PC-9 (cell line): ENCODE measurements at regions of chr16 and their contacts with region 1.

Region 1: GRCh38 chr16:30429678-30430427 is at the start of gene DCTPP1:
- DNase-seq: peak; percentile 98 to 99
- H3K4me3 ChIP-seq: peak within 1 kb of the TSS; percentile 67
- H3K27ac ChIP-seq: peak within 1 kb of the TSS; percentile 3; the same call in 1 of the 2 replicates
- H3K4me1 ChIP-seq: peaks cover 12% of the 10 kb centered on the region
- H3K27me3 ChIP-seq: no peaks in the 10 kb centered on the region
- CTCF ChIP-seq: peak; percentile 91
- total RNA-seq, gene DCTPP1: 80.4 and 109 TPM in 2 replicates

Region 2: GRCh38 chr16:30417529-30418349 is 12.1 kb before region 1 on chr16:
- CTCF ChIA-PET with region 1: interaction called, 18 read pairs
- POLR2A ChIA-PET with region 1: interaction called, 12 read pairs
- intact Hi-C with region 1: no loop called
- DNase-seq: peak; percentile 81 to 94
- H3K4me3 ChIP-seq: peak overlapping the region; percentile 69
- H3K27ac ChIP-seq: peak overlapping the region; percentile 49; the same call in 1 of the 2 replicates
- H3K4me1 ChIP-seq: peaks cover 7% of the 10 kb centered on the region; the same call in 1 of the 2 replicates
- H3K27me3 ChIP-seq: no peaks in the 10 kb centered on the region
- CTCF ChIP-seq: no peak

Region 3: GRCh38 chr16:30509081-30509765 is 79.4 kb after region 1 on chr16:
- CTCF ChIA-PET with region 1: no interaction called
- POLR2A ChIA-PET with region 1: no interaction called
- intact Hi-C with region 1: no loop called
- DNase-seq: no peak
- H3K4me3 ChIP-seq: no peak overlapping the region
- H3K27ac ChIP-seq: no peak overlapping the region
- H3K4me1 ChIP-seq: no peaks in the 10 kb centered on the region
- H3K27me3 ChIP-seq: 0 out of 2 replicates have a peak, but pooled peaks cover under 1% of the 10 kb centered on the region
- CTCF ChIP-seq: no peak

Region 4: DNA sequence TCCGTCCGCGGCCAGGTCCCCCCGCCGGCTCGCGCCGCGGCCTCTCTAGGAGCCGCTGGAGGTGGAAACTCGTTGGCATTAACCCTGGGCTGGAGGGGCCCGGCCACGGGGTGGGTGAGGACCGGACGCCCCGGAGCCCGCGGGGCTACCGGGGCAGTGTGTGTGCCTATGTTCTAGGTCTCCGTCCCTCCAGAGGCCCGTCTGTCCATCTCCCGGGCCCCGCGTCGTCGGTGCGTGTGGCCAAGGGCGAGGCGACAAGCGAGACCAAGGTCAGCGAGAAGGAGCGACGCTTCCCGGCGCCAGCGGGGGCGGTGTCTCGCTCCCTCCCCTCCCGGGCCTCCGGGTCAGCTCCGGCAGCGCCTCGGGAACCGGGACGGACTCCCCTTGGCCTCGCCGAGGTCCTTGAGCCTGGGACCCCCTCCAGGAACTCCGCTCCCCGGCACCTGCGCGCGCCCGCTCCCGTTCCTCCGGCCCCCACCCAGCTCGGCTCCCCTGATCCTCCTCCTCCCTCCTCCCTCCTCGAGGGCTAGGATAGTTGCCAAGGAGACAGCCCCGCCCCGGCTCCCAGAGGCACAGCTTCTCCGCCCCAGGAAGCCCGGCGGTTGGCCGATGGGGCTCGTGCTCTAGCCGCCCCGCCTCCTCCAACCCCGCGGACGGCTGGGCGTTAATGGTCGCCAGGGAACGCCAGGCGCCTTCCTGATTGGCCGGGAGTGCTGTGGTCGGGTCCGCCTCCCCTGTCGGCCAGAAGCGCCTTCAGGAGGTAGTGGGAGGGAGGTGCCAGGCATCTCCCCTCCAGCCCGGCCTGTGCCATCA is 97.2 kb after region 1 on chr16:
- CTCF ChIA-PET with region 1: interaction called, 3 read pairs
- POLR2A ChIA-PET with region 1: no interaction called
- intact Hi-C with region 1: loop called (anchors 2 kb)
- DNase-seq: peak; percentile 94 to 100
- H3K4me3 ChIP-seq: peak overlapping the region; percentile 97
- H3K27ac ChIP-seq: peak overlapping the region; percentile 79
- H3K4me1 ChIP-seq: peaks cover 32% of the 10 kb centered on the region
- H3K27me3 ChIP-seq: no peaks in the 10 kb centered on the region
- CTCF ChIP-seq: peak; percentile 50; the same call in 1 of the 2 replicates

Region 5: GRCh38 chr16:30602616-30603277 is 172.9 kb after region 1 on chr16:
- CTCF ChIA-PET with region 1: interaction called, 20 read pairs
- POLR2A ChIA-PET with region 1: no interaction called
- intact Hi-C with region 1: loop called (anchors 1 kb)
- DNase-seq: no peak
- H3K4me3 ChIP-seq: no peak overlapping the region
- H3K27ac ChIP-seq: no peak overlapping the region
- H3K4me1 ChIP-seq: no peaks in the 10 kb centered on the region
- H3K27me3 ChIP-seq: no peaks in the 10 kb centered on the region
- CTCF ChIP-seq: no peak

Region 6: GRCh38 chr16:30637942-30638341 is 208.1 kb after region 1 on chr16:
- CTCF ChIA-PET with region 1: interaction called, 4 read pairs
- POLR2A ChIA-PET with region 1: interaction called, 31 read pairs
- intact Hi-C with region 1: no loop called
- DNase-seq: peak; percentile 31 to 67
- H3K4me3 ChIP-seq: no peak overlapping the region
- H3K27ac ChIP-seq: no peak overlapping the region
- H3K4me1 ChIP-seq: peaks cover 13% of the 10 kb centered on the region; the same call in 1 of the 2 replicates
- H3K27me3 ChIP-seq: no peaks in the 10 kb centered on the region
- CTCF ChIP-seq: peak; percentile 73

Region 7: DNA sequence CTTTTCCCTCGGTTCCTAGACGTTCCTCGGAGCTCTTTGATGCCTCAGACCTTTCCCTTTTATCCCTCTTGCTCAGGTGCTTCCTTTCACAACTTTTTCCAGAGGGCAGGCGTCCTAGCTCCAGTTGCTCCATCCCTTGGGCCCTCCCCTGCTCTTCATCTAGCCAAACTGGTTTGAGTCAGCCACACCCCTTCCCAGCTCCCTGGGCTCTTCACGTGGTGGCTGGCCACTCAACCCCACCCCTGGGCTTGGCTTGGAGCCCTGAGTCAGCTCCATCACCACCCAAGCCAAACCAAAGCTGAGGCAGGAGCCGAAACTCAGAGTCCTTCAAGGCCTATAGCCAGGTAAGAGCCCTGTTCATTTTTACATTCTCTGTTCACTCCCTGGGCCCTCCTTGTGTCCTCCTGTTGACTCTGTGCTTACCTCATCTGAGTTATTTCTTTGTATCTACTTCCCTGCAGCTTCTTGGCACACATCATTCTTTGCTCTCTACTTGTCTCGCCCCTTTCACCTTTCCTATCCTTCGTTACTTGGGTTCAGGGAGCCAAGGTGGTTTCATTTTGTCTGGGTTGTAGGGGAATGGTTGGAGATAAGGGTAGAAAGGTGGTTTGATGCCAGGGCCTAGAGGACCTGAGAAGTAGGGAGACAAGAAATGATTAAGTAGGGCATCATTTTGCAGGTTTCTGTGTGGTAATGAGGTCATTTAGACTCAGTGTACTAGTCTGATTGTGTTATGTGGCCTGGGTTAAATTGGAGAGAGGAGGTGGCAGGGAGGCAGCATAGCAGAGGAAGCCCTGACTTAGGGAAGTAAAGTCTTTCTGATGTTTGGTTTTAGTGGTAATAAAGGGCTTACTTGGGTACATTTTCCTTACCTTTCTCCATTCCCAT is 310.8 kb after region 1 on chr16:
- CTCF ChIA-PET with region 1: no interaction called
- POLR2A ChIA-PET with region 1: interaction called, 10 read pairs
- intact Hi-C with region 1: no loop called
- DNase-seq: peak; percentile 98
- H3K4me3 ChIP-seq: peak overlapping the region; percentile 68
- H3K27ac ChIP-seq: peak overlapping the region; percentile 96
- H3K4me1 ChIP-seq: peaks cover 33% of the 10 kb centered on the region
- H3K27me3 ChIP-seq: no peaks in the 10 kb centered on the region
- CTCF ChIP-seq: 0 out of 2 replicates have a peak, but pooled peaks have one; percentile 17